ENCODE measurements at regions of chr2 and their contacts with region 1.

Region 1: DNA sequence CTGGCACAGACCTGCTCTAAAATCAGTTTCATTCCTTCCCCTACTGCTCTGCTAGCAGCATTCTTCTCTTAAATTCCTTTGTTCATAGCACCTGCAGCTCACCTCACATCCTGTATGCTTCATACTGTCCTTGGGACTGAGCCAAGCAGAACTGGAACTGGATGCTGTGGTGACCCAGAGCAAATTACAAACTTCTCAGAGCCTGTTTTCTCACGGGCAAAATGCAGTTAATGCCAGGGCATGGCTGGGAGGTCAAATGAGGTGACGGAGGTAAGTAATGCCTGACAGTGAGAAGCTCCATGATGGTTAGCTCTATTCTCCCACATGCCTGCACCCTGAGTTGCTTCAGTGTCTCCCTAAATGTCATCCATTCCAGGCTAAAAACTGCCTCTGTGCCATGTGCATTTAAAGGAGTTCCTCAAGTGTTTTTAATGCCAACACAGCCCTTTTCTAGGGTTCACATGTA is 29.7 kb downstream of the C2orf42 start:
- DNase-seq: no peak
- ATAC-seq: no peak
- H3K4me3 ChIP-seq: no peak overlapping the region
- H3K4me3 Mint-ChIP-seq: no peak overlapping the region
- H3K27ac ChIP-seq: no peak overlapping the region
- H3K27ac Mint-ChIP-seq: peak overlapping the region; percentile 49
- H3K4me1 ChIP-seq: peaks cover 5% of the 10 kb centered on the region
- H3K4me1 Mint-ChIP-seq: peaks cover 4% of the 10 kb centered on the region
- H3K27me3 ChIP-seq: no peaks in the 10 kb centered on the region
- H3K27me3 Mint-ChIP-seq: no peaks in the 10 kb centered on the region
- CTCF ChIP-seq: no peak

Region 2: GRCh38 chr2:70214953-70215549 is 53.9 kb after region 1 on chr2:
- CTCF ChIA-PET with region 1: no interaction called
- POLR2A ChIA-PET with region 1: no interaction called
- intact Hi-C with region 1: loop called in 1 of 2 experiments (anchors 10 kb)
- DNase-seq: no peak
- ATAC-seq: no peak
- H3K4me3 ChIP-seq: no peak overlapping the region
- H3K4me3 Mint-ChIP-seq: no peak overlapping the region
- H3K27ac ChIP-seq: no peak overlapping the region
- H3K27ac Mint-ChIP-seq: no peak overlapping the region
- H3K4me1 ChIP-seq: no peaks in the 10 kb centered on the region
- H3K4me1 Mint-ChIP-seq: peaks cover 3% of the 10 kb centered on the region
- H3K27me3 ChIP-seq: no peaks in the 10 kb centered on the region
- H3K27me3 Mint-ChIP-seq: no peaks in the 10 kb centered on the region
- CTCF ChIP-seq: no peak